Activated B cell treated with CpG ODN at 0.5 μM for 24 hours (primary cell): ENCODE measurements at regions of chr10 and their contacts with region 1.

Region 1: DNA sequence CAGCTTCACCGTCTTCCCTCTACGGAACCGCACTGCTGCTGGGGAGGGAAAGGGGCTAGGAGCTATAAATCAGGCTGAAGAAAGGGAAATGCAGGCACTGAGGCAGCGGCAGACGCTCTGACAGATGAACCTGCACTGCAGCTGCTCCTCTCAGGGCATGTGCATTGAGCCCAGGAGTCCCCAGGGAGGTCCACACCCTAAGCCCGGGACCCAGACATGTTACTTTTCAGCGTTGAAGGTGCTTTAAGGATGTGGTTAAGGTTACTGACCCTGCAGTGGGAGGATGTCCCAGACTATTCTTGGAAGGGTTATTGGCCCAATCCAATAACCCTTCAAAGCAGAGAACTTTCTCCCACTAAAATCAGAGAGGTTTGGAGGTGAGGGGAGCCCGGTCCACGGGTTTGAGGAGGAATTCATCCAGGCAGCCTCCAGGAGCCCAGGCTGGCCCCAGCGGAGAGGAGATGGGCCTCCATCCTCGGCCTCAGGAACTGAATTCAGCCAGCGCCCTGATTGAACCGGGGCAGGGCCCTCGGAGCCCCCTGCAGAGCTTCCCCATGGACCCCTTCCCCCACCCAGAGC is 75.4 kb downstream of the ADARB2 start:
- DNase-seq: peak; percentile 59
- ATAC-seq: peak; percentile 90
- H3K4me3 Mint-ChIP-seq: peak overlapping the region; percentile 67
- H3K27ac Mint-ChIP-seq: peak overlapping the region; percentile 72
- H3K4me1 Mint-ChIP-seq: peaks cover 51% of the 10 kb centered on the region
- H3K27me3 Mint-ChIP-seq: peaks cover 12% of the 10 kb centered on the region
- CTCF ChIP-seq: no peak

Region 2: GRCh38 chr10:1403508-1404322 is 258.2 kb before region 1 on chr10:
- CTCF ChIA-PET with region 1: no interaction called
- POLR2A ChIA-PET with region 1: no interaction called
- intact Hi-C with region 1: no loop called
- DNase-seq: no peak
- ATAC-seq: no peak
- H3K4me3 Mint-ChIP-seq: no peak overlapping the region
- H3K27ac Mint-ChIP-seq: no peak overlapping the region
- H3K4me1 Mint-ChIP-seq: no peaks in the 10 kb centered on the region
- H3K27me3 Mint-ChIP-seq: peaks cover 27% of the 10 kb centered on the region
- CTCF ChIP-seq: no peak

Region 3: DNA sequence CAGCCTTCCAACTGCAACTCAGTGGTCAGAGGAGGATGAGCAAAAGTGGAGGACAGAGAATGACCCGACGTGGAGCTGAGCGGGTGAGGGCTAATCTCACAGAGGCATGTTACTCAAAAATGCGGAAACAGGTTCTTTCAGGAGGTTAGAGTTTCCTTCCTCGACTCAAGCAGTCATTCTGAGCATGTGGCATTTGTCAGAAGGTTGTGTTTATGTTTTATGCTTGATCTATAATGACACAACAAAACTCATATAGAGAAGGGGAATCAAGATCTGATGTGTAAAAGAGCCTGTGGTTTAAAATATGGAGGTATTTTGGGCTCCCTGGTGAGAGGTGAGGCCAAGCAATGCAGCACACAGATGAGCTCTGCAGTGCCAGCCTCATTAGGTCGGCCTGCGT is 236.1 kb before region 1 on chr10:
- CTCF ChIA-PET with region 1: no interaction called
- POLR2A ChIA-PET with region 1: interaction called, 3 read pairs
- intact Hi-C with region 1: loop called (anchors 1 kb)
- DNase-seq: no peak
- ATAC-seq: peak; percentile 71
- H3K4me3 Mint-ChIP-seq: peak overlapping the region; percentile 42
- H3K27ac Mint-ChIP-seq: peak overlapping the region; percentile 77
- H3K4me1 Mint-ChIP-seq: peaks cover 65% of the 10 kb centered on the region
- H3K27me3 Mint-ChIP-seq: peaks cover 2% of the 10 kb centered on the region
- CTCF ChIP-seq: no peak

Region 4: DNA sequence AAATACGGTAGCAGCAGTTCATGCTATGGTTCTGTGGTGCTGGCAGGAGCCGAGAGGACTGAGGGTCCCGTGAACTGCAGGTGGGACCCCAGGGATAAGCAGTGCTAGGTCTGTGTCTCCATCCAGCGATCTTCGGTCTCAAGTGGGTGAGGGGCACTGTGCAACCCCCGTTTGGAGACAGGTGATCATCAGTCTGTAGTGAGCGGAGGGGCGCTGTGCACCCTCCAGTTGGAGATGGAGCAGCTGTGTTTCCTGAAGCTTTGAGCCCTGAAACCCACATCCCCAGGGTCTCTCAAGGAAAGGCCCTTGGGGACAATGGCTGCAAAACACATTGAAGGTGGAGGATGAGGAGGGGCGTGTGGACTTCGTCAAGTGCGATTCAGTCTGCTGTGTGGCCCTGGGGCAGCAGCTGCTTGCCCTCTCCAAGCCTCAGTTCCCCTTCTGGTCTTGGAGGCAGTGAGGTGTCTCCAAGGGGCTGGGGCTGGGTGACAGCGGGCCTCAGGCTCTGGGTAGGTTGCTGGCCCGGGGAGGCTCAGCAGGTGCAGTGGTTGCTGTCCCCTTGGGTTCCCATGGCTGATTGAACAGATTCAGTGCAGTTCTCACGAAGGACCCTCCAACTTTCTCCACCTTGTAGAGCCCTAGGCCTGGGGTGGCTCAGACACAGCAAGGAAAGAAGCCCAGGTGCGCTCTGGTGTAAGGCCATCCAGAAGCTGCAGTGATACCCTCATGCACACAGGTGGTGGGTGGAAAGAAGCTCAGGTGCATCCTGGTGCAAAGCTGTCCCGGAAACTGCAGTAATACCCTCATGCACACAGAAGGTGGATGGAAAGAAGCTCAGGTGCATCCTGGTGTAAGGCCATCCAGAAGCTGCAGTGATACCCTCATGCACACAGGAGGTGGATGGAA is 85.2 kb before region 1 on chr10:
- CTCF ChIA-PET with region 1: no interaction called
- POLR2A ChIA-PET with region 1: interaction called, 3 read pairs
- intact Hi-C with region 1: loop called (anchors 1 kb)
- DNase-seq: no peak
- ATAC-seq: peak; percentile 70
- H3K4me3 Mint-ChIP-seq: no peak overlapping the region
- H3K27ac Mint-ChIP-seq: no peak overlapping the region
- H3K4me1 Mint-ChIP-seq: peaks cover 71% of the 10 kb centered on the region
- H3K27me3 Mint-ChIP-seq: peaks cover 12% of the 10 kb centered on the region
- CTCF ChIP-seq: no peak

Region 5: GRCh38 chr10:1635340-1635739 is 26.6 kb before region 1 on chr10:
- CTCF ChIA-PET with region 1: no interaction called
- POLR2A ChIA-PET with region 1: no interaction called
- intact Hi-C with region 1: no loop called
- DNase-seq: no peak
- ATAC-seq: no peak
- H3K4me3 Mint-ChIP-seq: no peak overlapping the region
- H3K27ac Mint-ChIP-seq: no peak overlapping the region
- H3K4me1 Mint-ChIP-seq: no peaks in the 10 kb centered on the region
- H3K27me3 Mint-ChIP-seq: peaks cover 19% of the 10 kb centered on the region
- CTCF ChIP-seq: no peak

Region 6: DNA sequence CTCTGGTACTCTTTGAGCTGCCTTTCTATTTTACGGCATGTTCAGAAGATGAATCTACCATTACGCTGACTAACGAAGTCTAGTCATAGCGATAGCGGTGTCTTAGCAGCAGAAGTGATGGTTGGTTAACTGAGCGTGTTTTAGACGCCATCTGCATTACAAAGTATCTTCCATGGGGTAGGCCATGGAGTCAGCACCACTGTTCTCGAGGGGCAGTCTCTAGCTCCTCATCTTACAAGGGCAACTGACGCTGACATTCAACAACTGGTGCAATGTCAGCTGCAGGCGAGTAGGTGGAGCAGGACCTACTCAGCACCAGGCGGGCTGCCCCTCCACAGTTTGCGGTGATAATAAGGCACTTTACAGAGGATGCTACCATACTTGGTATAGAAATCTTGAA is 13.3 kb before region 1 on chr10:
- CTCF ChIA-PET with region 1: no interaction called
- POLR2A ChIA-PET with region 1: interaction called, 9 read pairs
- intact Hi-C with region 1: loop called (anchors 1 kb)
- DNase-seq: no peak
- ATAC-seq: peak; percentile 89
- H3K4me3 Mint-ChIP-seq: no peak overlapping the region
- H3K27ac Mint-ChIP-seq: no peak overlapping the region
- H3K4me1 Mint-ChIP-seq: peaks cover 5% of the 10 kb centered on the region
- H3K27me3 Mint-ChIP-seq: peaks cover 19% of the 10 kb centered on the region
- CTCF ChIP-seq: no peak

Region 7: DNA sequence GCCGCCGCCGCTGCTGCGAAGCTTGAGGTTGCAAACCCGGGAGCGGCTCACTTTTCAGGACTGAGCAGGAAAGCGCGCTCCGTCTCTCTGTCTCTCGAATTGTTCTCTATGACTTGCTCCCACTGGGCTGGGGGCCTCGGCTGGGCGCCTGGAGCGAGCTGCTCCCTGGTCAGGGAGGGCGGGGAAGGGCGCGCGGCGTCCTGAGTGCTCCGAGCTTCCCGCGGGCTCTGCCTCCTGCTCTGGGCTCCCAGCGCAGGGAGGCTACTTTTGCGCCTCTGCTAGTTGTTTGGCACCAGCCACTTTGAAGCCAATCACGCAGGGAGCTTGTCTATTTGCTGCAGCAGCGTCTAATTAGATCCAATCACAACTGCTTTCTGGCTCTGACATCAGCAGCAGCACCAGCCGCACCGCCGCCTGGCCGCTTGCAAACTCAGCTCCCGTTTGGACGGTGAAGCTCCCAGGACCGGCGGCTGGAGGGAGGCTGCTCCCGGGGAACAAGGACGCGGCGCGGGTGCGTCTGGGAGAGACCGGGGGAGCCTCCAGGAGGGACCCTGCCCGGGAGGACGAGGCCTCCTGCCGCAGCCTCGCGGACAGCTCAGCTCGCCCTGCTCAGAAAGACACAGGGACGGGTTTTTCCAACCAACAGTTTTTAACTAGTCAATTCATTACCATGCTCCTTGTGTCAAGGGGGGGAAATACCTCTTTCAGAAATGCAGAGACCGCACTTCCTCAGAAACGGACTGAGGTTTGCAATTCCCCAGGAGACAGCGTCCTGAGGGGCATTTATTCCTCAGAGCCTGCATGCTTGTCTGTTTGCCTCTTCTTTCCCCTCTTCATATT is 75.5 kb after region 1 on chr10 and contains the start of gene ADARB2:
- CTCF ChIA-PET with region 1: no interaction called
- POLR2A ChIA-PET with region 1: no interaction called
- intact Hi-C with region 1: loop called (anchors 5 kb)
- DNase-seq: peak; percentile 30
- ATAC-seq: peak; percentile 49
- H3K4me3 Mint-ChIP-seq: peak within 1 kb of the TSS; percentile 70
- H3K27ac Mint-ChIP-seq: no peak within 1 kb of the TSS
- H3K4me1 Mint-ChIP-seq: peaks cover 37% of the 10 kb centered on the region
- H3K27me3 Mint-ChIP-seq: peaks cover 66% of the 10 kb centered on the region
- CTCF ChIP-seq: no peak
- total RNA-seq, gene ADARB2: 0.10 and 0.11 TPM in 2 replicates